GM10248 (cell line): ENCODE measurements at regions of chr12 and their contacts with region 1.

Region 1: DNA sequence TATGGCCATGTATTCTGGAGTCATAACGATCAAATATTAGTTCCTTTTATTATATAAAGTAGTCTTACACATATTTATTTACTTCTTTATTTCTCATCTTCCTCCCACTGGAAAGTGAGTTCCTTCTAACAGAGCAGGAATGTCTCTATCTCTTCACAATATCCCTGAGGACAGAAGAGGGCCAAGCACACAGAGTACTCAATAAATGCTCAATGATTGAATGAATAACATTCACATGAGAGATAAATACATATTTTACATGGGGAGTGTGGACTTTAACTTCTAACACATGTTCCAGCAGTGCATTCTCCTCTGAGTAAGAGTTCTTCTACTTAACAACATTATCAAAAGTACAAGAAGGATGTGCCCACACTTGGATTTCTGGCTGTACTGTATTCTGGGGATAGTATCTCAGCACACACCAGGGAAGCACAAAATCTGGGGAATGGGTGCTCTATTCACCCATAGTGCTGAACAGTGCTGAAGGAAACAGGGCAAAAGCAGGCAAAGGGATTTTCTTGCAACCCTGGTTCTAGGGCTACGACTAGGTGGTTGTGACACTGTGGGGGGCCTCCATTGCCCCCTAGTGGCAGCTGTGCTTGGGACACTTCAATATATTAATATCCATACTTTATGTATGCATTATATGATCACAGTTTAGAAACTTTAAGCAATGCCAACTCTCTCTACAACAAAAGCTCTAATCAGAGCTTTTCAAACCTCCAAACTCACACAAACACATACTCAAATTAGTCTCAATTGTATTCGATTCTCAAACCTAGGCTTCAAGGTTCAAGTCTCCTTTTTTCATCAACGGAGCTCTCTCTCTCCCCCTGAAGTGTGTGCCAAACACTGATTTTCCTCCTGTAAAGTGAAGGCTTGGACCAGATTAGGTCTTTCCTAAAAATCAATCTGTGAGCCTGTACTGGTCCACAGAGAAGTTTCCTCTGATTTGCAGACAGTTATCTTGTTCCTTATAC is 115.5 kb downstream of the SLC2A13 start:
- DNase-seq: peak; percentile 42
- CTCF ChIP-seq: peak; percentile 88

Region 2: GRCh38 chr12:39764944-39765560 is 225.4 kb before region 1 on chr12:
- CTCF ChIA-PET with region 1: interaction called, 15 read pairs
- POLR2A ChIA-PET with region 1: no interaction called
- DNase-seq: peak; percentile 15
- CTCF ChIP-seq: peak; percentile 74

Region 3: GRCh38 chr12:40010899-40011774 is 20.7 kb after region 1 on chr12:
- CTCF ChIA-PET with region 1: interaction called, 49 read pairs
- POLR2A ChIA-PET with region 1: no interaction called
- DNase-seq: peak; percentile 54
- CTCF ChIP-seq: peak; percentile 81

Region 4: GRCh38 chr12:40032433-40033241 is 42.2 kb after region 1 on chr12:
- CTCF ChIA-PET with region 1: interaction called, 10 read pairs
- POLR2A ChIA-PET with region 1: no interaction called
- DNase-seq: no peak
- CTCF ChIP-seq: no peak